ENCODE measurements at regions of chr12 and their contacts with region 1.

Region 1: GRCh38 chr12:31749024-31749704 is 20.3 kb upstream of the AMN1 start:
- DNase-seq: peak; percentile 99
- ATAC-seq: peak; percentile 81
- H3K4me3 ChIP-seq: no peak overlapping the region
- H3K27ac ChIP-seq: peak overlapping the region; percentile 77
- H3K4me1 ChIP-seq: peaks cover 55% of the 10 kb centered on the region
- H3K27me3 ChIP-seq: no peaks in the 10 kb centered on the region
- CTCF ChIP-seq: no peak
- EP300 ChIP-seq: peak; percentile 94 to 97
- POLR2A ChIP-seq: peak; percentile 66
- RAD21 ChIP-seq: peak; percentile 25; the same call in 1 of the 2 replicates

Region 2: DNA sequence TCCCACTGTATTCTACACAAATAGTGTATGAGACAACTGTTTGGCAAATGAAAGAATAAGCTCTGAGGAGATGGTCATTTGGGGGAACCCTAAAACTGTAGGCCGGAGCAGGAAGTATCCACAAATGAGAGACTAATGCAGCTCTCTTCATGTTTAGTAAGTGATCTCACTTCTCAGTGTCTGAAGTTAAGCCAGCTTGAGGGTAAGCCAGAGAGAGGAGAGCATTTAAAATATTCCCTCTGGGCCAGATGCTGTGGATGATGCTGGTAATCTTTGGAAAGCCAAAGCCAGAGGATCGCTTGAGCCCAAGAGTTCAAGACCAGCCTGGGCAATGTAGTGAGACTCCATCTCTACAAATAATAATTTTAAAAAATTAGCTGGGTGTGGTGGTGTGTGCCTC is 292.6 kb before region 1 on chr12:
- CTCF ChIA-PET with region 1: no interaction called
- POLR2A ChIA-PET with region 1: no interaction called
- RAD21 ChIA-PET with region 1: no interaction called
- SMC1A ChIA-PET with region 1: no interaction called
- in situ Hi-C with region 1: no loop called
- intact Hi-C with region 1: no loop called
- DNase-seq: no peak
- ATAC-seq: no peak
- H3K4me3 ChIP-seq: no peak overlapping the region
- H3K27ac ChIP-seq: no peak overlapping the region
- H3K4me1 ChIP-seq: no peaks in the 10 kb centered on the region
- H3K27me3 ChIP-seq: no peaks in the 10 kb centered on the region
- CTCF ChIP-seq: no peak
- EP300 ChIP-seq: no peak
- POLR2A ChIP-seq: no peak
- RAD21 ChIP-seq: no peak

Region 3: GRCh38 chr12:31589904-31590641 is 159.1 kb before region 1 on chr12:
- CTCF ChIA-PET with region 1: no interaction called
- POLR2A ChIA-PET with region 1: no interaction called
- RAD21 ChIA-PET with region 1: no interaction called
- SMC1A ChIA-PET with region 1: no interaction called
- in situ Hi-C with region 1: no loop called
- intact Hi-C with region 1: no loop called
- DNase-seq: no peak
- ATAC-seq: peak; percentile 64
- H3K4me3 ChIP-seq: peak overlapping the region; percentile 87
- H3K27ac ChIP-seq: peak overlapping the region; percentile 93
- H3K4me1 ChIP-seq: peaks cover 27% of the 10 kb centered on the region
- H3K27me3 ChIP-seq: no peaks in the 10 kb centered on the region
- CTCF ChIP-seq: 0 out of 6 replicates have a peak, but pooled peaks of 1 of the 3 experiments have one; percentile 5
- EP300 ChIP-seq: no peak
- POLR2A ChIP-seq: peak; percentile 65; the same call in 1 of the 2 replicates
- RAD21 ChIP-seq: peak; percentile 34; the same call in 1 of the 2 replicates

Region 4: DNA sequence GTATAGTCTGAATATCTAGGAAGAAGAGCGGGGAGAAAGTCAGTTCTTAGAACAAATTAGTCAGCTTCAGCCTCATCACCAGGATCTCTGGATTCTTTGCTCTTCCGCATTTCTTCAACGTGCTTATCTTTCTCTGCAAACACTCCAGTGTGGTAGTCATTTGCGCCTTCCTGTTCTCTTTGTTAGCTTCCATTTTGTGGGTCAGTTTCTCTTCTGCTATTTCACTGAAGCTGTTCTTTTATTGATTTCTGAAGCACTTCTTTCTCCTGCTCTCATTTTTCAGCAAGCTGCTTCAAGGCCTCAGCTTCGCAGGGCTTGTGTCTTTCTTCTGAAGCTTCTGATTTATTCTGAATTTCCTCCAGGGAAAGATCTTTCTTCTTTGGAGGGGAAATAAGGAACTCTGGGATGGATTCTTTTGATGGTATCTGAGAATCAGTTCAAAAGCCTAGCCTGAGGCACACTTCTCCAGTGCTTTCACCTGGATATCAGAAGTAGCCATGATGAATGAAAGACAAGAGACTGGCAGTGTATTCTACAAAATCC is 33.8 kb before region 1 on chr12:
- CTCF ChIA-PET with region 1: interaction called, 3 read pairs
- POLR2A ChIA-PET with region 1: interaction called, 12 read pairs
- RAD21 ChIA-PET with region 1: interaction called, 30 read pairs
- SMC1A ChIA-PET with region 1: interaction called, 23 read pairs
- in situ Hi-C with region 1: no loop called
- intact Hi-C with region 1: no loop called
- DNase-seq: peak; percentile 77
- ATAC-seq: peak; percentile 95
- H3K4me3 ChIP-seq: peak overlapping the region; percentile 54; the same call in 1 of the 2 replicates
- H3K27ac ChIP-seq: peak overlapping the region; percentile 90
- H3K4me1 ChIP-seq: peaks cover 10% of the 10 kb centered on the region
- H3K27me3 ChIP-seq: no peaks in the 10 kb centered on the region
- CTCF ChIP-seq: no peak
- EP300 ChIP-seq: peak in 1 of 2 experiments; percentile 35; a peak in 1 of 4 replicates
- POLR2A ChIP-seq: no peak
- RAD21 ChIP-seq: peak; percentile 13

Region 5: DNA sequence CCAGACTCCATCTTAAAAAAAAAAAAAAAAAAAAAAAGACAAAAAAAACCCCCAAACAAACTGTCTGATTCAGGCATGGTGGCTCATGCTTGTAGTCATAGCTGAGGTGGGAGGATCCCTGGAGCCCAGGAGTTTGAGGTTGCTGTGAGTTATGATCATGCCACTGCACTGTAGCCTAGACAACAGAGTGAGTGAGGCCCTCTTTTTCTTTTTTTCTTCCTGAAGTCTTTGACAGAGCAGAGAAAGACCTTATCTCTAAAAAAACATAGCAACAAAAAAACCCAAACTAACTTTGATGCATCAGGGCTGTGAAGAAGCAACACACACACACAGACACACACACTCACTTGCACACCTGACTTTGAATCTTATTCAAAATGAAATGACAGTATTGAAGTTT is 12.7 kb before region 1 on chr12:
- CTCF ChIA-PET with region 1: interaction called, 19 read pairs
- POLR2A ChIA-PET with region 1: interaction called, 82 read pairs
- RAD21 ChIA-PET with region 1: interaction called, 49 read pairs
- SMC1A ChIA-PET with region 1: interaction called, 66 read pairs
- in situ Hi-C with region 1: no loop called
- intact Hi-C with region 1: loop called (anchors 1 kb)
- DNase-seq: no peak
- ATAC-seq: peak; percentile 72
- H3K4me3 ChIP-seq: no peak overlapping the region
- H3K27ac ChIP-seq: no peak overlapping the region
- H3K4me1 ChIP-seq: peaks cover 17% of the 10 kb centered on the region
- H3K27me3 ChIP-seq: no peaks in the 10 kb centered on the region
- CTCF ChIP-seq: no peak
- EP300 ChIP-seq: no peak
- POLR2A ChIP-seq: no peak
- RAD21 ChIP-seq: no peak

Region 6: DNA sequence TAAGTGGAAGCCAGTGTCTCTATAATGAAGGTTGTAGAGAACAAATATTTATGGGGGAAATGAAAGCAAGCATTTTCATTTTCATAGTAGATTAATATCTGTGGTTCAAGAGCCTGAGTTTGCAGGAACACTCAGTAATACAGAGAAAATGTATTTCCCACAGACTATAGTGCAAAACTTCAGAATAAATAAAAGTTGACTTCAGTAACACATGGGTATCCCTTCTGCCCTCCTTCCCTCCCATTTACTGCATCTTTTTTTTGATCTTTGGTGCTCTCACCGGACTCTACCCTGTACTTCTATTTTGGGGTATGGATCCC is 55.0 kb after region 1 on chr12:
- CTCF ChIA-PET with region 1: interaction called, 9 read pairs
- POLR2A ChIA-PET with region 1: interaction called, 66 read pairs
- RAD21 ChIA-PET with region 1: interaction called, 112 read pairs
- SMC1A ChIA-PET with region 1: interaction called, 46 read pairs
- in situ Hi-C with region 1: no loop called
- intact Hi-C with region 1: loop called (anchors 1 kb)
- DNase-seq: no peak
- ATAC-seq: peak; percentile 40
- H3K4me3 ChIP-seq: no peak overlapping the region
- H3K27ac ChIP-seq: peak overlapping the region; percentile 57
- H3K4me1 ChIP-seq: peaks cover 24% of the 10 kb centered on the region
- H3K27me3 ChIP-seq: no peaks in the 10 kb centered on the region
- CTCF ChIP-seq: no peak
- EP300 ChIP-seq: peak in 1 of 2 experiments; percentile 50; a peak in 1 of 4 replicates
- POLR2A ChIP-seq: no peak
- RAD21 ChIP-seq: 0 out of 2 replicates have a peak, but pooled peaks have one; percentile 1

Region 7: DNA sequence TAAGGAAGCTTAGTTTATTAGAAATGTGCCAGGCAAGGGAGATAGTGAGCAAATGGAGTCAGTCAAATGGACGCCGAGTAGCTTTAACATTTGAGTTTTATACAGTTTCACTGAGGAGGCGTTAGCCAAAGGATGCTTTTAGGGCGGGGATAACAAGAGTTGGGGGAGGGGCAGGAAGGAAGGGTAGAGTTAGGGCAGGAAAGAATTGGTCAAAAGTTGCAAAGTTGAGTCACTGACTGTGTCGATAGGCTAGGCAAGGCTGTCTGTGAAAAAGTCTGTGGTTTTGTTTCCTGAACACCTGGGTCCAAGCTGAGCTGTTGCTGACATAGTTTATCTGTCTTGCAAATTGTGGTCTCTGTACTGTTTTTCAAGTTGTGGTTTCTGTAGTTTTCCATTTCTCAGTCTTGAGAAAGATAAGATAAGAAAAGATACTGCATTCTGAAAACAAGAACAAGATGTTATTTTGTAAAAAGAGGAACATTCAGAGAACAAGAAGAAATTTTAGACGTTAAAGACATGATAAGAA is 147.4 kb after region 1 on chr12:
- CTCF ChIA-PET with region 1: interaction called, 7 read pairs
- POLR2A ChIA-PET with region 1: interaction called, 3 read pairs
- RAD21 ChIA-PET with region 1: interaction called, 4 read pairs
- SMC1A ChIA-PET with region 1: interaction called, 7 read pairs
- in situ Hi-C with region 1: no loop called
- intact Hi-C with region 1: loop called (anchors 2 kb)
- DNase-seq: peak; percentile 99
- ATAC-seq: peak; percentile 99
- H3K4me3 ChIP-seq: no peak overlapping the region
- H3K27ac ChIP-seq: peak overlapping the region; percentile 98
- H3K4me1 ChIP-seq: peaks cover 21% of the 10 kb centered on the region
- H3K27me3 ChIP-seq: no peaks in the 10 kb centered on the region
- CTCF ChIP-seq: no peak
- EP300 ChIP-seq: peak; percentile 95
- POLR2A ChIP-seq: peak; percentile 62
- RAD21 ChIP-seq: 0 out of 2 replicates have a peak, but pooled peaks have one; percentile 14

Region 8: DNA sequence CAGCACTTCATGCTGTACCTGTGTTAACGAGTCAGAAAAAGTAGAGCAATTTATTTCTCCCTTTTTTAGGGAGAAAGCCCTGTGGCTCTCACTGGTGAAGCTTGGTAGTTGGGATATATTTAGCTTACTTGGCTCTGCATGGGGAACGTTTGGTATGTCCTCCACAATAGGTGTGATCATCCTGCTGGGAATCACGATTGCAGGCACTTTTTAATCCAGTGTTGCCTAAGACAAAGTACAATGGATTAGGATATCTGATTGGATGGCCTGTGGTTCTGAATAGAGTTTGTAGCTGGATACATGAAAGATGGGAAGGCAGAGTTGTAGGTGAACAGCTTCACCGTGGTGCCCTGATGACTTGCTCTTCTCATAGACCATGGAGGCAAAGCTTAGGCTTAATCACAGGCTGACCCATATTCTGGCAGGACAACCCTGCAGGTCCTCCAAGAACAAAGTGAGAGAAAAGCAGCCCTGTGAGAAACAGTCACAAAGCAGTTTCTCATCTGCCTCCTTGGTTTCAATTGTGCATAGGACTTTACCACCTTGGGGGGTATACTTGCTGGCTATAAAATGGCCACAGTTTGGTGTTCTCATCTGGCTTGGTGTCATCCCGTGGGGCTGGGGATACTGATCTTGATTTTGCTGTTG is 217.5 kb after region 1 on chr12:
- CTCF ChIA-PET with region 1: no interaction called
- POLR2A ChIA-PET with region 1: interaction called, 4 read pairs
- RAD21 ChIA-PET with region 1: no interaction called
- SMC1A ChIA-PET with region 1: interaction called, 3 read pairs
- in situ Hi-C with region 1: no loop called
- intact Hi-C with region 1: loop called (anchors 5 kb)
- DNase-seq: no peak
- ATAC-seq: peak; percentile 68
- H3K4me3 ChIP-seq: no peak overlapping the region; the same call in 1 of the 2 replicates
- H3K27ac ChIP-seq: peak overlapping the region; percentile 63
- H3K4me1 ChIP-seq: peaks cover 11% of the 10 kb centered on the region; the same call in 1 of the 2 replicates
- H3K27me3 ChIP-seq: no peaks in the 10 kb centered on the region
- CTCF ChIP-seq: no peak
- EP300 ChIP-seq: no peak
- POLR2A ChIP-seq: 0 out of 2 replicates have a peak, but pooled peaks have one; percentile 26
- RAD21 ChIP-seq: no peak